ENCODE measurements at regions of chr15 and their contacts with region 1.

Region 1: DNA sequence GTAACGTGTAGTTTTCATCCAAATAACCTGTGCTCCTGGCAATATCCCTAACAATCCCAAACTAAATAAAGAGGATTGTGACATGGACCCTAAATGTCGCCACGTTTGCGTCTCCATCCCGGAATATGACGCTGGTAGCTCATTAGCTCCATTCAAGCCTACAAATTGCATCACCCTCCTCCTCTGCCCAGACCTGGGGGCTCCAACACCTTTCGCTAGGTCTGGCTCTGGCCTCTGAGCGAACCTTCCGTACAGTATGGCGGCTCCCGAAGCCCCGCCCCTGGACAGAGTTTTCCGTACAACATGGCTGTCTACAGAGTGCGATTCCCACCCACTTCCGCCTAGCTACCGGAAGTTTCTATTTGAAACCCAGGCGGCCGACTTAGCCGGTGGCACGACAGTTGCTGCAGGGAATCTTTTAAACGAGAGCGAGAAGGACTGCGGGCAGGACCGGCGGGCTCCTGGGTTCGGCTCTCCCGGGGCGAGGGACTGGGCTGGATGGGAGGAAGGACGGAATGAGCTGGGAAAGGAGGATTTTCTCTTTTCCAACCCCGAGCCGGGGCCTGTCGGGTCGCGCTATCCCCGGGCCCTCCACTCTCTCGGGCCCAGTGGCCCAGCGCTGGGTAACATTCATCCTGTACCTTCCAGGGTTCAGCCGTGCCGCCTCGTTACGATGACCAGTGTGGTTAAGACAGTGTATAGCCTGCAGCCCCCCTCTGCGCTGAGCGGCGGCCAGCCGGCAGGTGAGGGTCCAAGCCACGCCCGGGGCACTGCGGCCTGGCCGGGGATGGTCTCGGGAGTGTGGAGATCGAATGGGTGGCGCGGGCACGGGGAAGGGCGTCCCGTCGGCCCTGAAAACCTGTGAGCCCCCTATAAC is at the start of gene KNSTRN:
- DNase-seq: peak; percentile 78 to 93 (median 91)
- ATAC-seq: peak; percentile 100
- H3K4me3 ChIP-seq: peak within 1 kb of the TSS; percentile 70
- H3K4me3 Mint-ChIP-seq: peak within 1 kb of the TSS; percentile 92 to 99 (median 98)
- H3K27ac ChIP-seq: peak within 1 kb of the TSS; percentile 65
- H3K27ac Mint-ChIP-seq: peak within 1 kb of the TSS; percentile 63 to 95 (median 85)
- H3K4me1 ChIP-seq: peaks cover 6 to 7% of the 10 kb centered on the region in 2 donors
- H3K4me1 Mint-ChIP-seq: peaks cover 14 to 26% (median 22%) of the 10 kb centered on the region in 7 donors
- H3K27me3 ChIP-seq: no peaks in the 10 kb centered on the region
- H3K27me3 Mint-ChIP-seq: peaks cover 0 to 13% (median 0%) of the 10 kb centered on the region in 5 donors
- total RNA-seq, gene KNSTRN: 3.7 to 39.6 (median 6.2) TPM

Region 2: GRCh38 chr15:40160689-40161688 is 221.8 kb before region 1 on chr15 and contains the start of gene BUB1B:
- CTCF ChIA-PET with region 1: no interaction called
- POLR2A ChIA-PET with region 1: no interaction called
- intact Hi-C with region 1: loop called in 1 of 2 experiments (anchors 1 kb)
- DNase-seq: peak; percentile 79 to 94 (median 92)
- ATAC-seq: peak; percentile 100
- H3K4me3 ChIP-seq: peak within 1 kb of the TSS; percentile 80
- H3K4me3 Mint-ChIP-seq: peak within 1 kb of the TSS in 2 of 10 donors; percentile 15 to 51
- H3K27ac ChIP-seq: peak within 1 kb of the TSS; percentile 29
- H3K27ac Mint-ChIP-seq: no peak within 1 kb of the TSS
- H3K4me1 ChIP-seq: peaks cover 0 to 7% of the 10 kb centered on the region in 2 donors
- H3K4me1 Mint-ChIP-seq: peaks cover 0 to 12% (median 0%) of the 10 kb centered on the region in 7 donors
- H3K27me3 ChIP-seq: no peaks in the 10 kb centered on the region
- H3K27me3 Mint-ChIP-seq: no peaks in the 10 kb centered on the region
- total RNA-seq, gene BUB1B: 0.41 to 55.7 (median 1.2) TPM

Region 3: GRCh38 chr15:40367686-40368611 is 14.9 kb before region 1 on chr15:
- CTCF ChIA-PET with region 1: interaction called, 5 read pairs
- POLR2A ChIA-PET with region 1: interaction called, 8 read pairs
- intact Hi-C with region 1: loop called (anchors 1 kb)
- DNase-seq: peak; percentile 82 to 89 (median 86)
- ATAC-seq: peak; percentile 98
- H3K4me3 ChIP-seq: peak overlapping the region; percentile 59
- H3K4me3 Mint-ChIP-seq: peak overlapping the region; percentile 80 to 91 (median 85)
- H3K27ac ChIP-seq: no peak overlapping the region
- H3K27ac Mint-ChIP-seq: peak overlapping the region in 8 of 9 donors; percentile 45 to 91 (median 79)
- H3K4me1 ChIP-seq: peaks cover 19 to 24% of the 10 kb centered on the region in 2 donors
- H3K4me1 Mint-ChIP-seq: peaks cover 14 to 33% (median 26%) of the 10 kb centered on the region in 7 donors
- H3K27me3 ChIP-seq: no peaks in the 10 kb centered on the region
- H3K27me3 Mint-ChIP-seq: peaks cover 0 to 16% (median 0%) of the 10 kb centered on the region in 5 donors

Region 4: DNA sequence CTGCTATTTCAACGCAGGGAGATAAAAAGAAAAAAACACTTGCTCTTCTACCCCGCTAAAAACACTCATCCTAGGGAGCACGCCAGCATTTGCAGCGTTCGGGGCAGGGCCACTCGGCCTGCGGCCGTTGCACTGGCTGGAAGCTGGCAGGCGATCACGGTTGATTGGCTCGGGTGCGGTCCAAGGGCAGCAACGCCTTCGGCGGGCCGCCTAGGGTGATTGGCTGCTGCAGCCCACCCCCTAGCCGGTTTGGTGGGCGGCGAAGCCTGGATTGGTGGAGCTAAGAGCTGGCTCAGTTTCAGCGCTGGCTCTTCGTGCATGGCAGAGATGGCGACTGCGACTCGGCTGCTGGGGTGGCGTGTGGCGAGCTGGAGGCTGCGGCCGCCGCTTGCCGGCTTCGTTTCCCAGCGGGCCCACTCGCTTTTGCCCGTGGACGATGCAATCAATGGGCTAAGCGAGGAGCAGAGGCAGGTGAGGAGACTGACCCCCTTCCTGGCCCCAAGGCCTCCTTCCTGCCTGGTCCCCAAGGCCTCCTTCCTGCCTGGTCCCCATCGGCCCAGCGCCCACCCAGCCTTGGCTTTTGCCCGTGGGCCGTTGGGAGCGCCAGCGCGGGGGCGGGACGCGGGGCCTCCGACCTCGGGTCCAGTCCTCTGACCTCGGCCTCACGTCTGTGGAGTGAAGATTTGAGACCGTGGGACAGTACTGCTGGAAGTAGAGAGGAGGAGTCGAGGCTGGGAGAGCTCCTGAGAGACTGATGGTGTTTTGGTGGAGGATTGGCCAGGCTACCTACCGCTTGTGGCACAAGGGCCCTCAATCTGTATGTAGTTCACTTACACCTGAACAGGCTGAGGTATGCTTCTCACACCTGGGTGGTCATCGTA is 22.9 kb after region 1 on chr15 and contains the start of gene IVD:
- CTCF ChIA-PET with region 1: no interaction called
- POLR2A ChIA-PET with region 1: interaction called, 19 read pairs
- intact Hi-C with region 1: loop called in 1 of 2 experiments (anchors 1 kb)
- DNase-seq: peak; percentile 67 to 88 (median 79)
- ATAC-seq: peak; percentile 99
- H3K4me3 ChIP-seq: peak within 1 kb of the TSS; percentile 49
- H3K4me3 Mint-ChIP-seq: peak within 1 kb of the TSS; percentile 79 to 94 (median 92)
- H3K27ac ChIP-seq: peak within 1 kb of the TSS; percentile 70
- H3K27ac Mint-ChIP-seq: peak within 1 kb of the TSS; percentile 38 to 92 (median 90)
- H3K4me1 ChIP-seq: peaks cover 6 to 15% of the 10 kb centered on the region in 2 donors
- H3K4me1 Mint-ChIP-seq: peaks cover 9 to 49% (median 30%) of the 10 kb centered on the region in 7 donors
- H3K27me3 ChIP-seq: no peaks in the 10 kb centered on the region
- H3K27me3 Mint-ChIP-seq: no peaks in the 10 kb centered on the region
- total RNA-seq, gene IVD: 47.2 to 81.8 (median 64.7) TPM